Common myeloid progenitor, CD34-positive (primary cell): ENCODE measurements at regions of chr2 and their contacts with region 1.

Region 1: DNA sequence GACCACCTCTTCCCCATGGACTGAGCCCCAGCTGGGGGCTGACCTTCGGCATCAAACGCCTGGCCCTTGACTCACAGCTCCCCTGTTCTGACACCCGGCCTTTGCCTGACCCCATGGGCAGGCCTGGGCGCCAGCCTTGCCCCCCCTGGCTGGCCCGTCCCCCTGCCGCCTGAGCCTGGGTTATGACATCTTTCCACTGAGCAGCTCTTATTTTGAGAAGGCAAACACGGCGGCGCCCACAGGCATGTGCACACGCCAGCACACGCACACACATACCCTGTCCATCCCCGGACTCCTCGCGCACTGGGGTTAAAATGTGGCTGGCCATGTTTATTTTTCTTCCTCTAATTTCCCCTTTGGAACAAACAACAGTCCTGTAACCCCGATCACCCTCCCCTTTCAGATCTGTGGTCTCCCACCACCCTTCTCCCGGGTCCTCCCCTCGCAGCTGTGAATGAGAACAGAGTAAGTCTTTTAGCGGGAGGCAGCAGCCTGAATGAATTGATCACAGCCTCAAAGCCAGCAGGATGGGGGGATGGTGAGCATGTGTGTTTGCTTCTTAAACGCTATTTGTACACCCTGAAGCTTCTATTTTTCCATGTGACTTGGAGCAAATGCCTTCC is 11.8 kb upstream of the ATOH8 start:
- DNase-seq: peak in 2 of 3 donors; percentile 44 to 70
- H3K4me3 ChIP-seq: no peak overlapping the region
- H3K27ac ChIP-seq: no peak overlapping the region
- H3K4me1 ChIP-seq: peaks cover 0 to 11% (median 4%) of the 10 kb centered on the region in 4 experiments
- H3K27me3 ChIP-seq: peaks cover 0 to 20% (median 16%) of the 10 kb centered on the region in 5 experiments

Region 2: DNA sequence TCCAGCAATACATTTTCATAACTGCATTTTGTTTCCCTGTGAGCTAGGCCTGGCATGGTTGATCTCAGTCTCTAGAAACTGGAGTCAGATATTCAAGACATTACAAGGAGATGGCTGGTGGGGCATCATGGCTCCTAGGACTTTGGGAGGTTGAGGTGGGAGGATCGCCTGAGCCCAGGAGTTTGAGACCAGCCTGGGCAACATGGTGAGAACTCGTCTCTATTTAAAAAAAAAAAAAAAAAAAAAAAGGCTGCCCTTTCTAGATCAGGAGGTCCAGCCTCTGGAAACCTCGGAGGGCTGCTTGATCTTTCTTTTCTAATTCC is 164.9 kb before region 1 on chr2:
- CTCF ChIA-PET with region 1: no interaction called
- POLR2A ChIA-PET with region 1: no interaction called
- DNase-seq: no peak
- H3K4me3 ChIP-seq: peak overlapping the region in 6 of 7 experiments; percentile 38 to 92 (median 74)
- H3K27ac ChIP-seq: peak overlapping the region; percentile 91 to 95
- H3K4me1 ChIP-seq: peaks cover 12 to 47% (median 43%) of the 10 kb centered on the region in 4 experiments
- H3K27me3 ChIP-seq: no peaks in the 10 kb centered on the region

Region 3: GRCh38 chr2:85728883-85729824 is 12.8 kb before region 1 on chr2:
- CTCF ChIA-PET with region 1: interaction called, 29 read pairs
- POLR2A ChIA-PET with region 1: no interaction called
- DNase-seq: peak; percentile 59 to 77 (median 73)
- H3K4me3 ChIP-seq: no peak overlapping the region
- H3K27ac ChIP-seq: no peak overlapping the region
- H3K4me1 ChIP-seq: peaks cover 0 to 10% (median 4%) of the 10 kb centered on the region in 4 experiments
- H3K27me3 ChIP-seq: peaks cover 0 to 5% (median 2%) of the 10 kb centered on the region in 5 experiments

Region 4: DNA sequence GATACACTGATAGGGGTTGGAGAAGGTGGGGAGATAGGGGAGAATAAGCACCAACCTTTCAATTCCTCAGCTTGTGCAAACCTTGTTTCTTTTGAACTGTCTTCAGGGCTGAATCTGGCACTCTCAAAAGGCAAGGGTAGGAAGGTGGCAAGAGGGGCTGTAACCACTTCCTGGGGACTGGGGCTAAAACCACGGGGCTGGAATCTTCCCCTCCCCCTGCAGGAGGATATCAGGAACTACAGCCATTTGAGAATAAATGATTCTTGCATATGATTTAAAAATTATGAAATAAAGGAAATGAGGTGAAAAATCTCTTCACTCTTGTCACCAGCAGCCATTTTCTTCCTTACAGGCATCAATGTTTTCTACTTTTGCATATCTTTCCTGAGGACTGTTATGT is 62.6 kb after region 1 on chr2:
- CTCF ChIA-PET with region 1: interaction called, 218 read pairs
- POLR2A ChIA-PET with region 1: no interaction called
- DNase-seq: peak; percentile 34 to 76 (median 76)
- H3K4me3 ChIP-seq: no peak overlapping the region
- H3K27ac ChIP-seq: no peak overlapping the region
- H3K4me1 ChIP-seq: peaks cover 0 to 9% (median 6%) of the 10 kb centered on the region in 4 experiments
- H3K27me3 ChIP-seq: no peaks in the 10 kb centered on the region